ENCODE measurements at regions of chr6 and their contacts with region 1.

Region 1: GRCh38 chr6:18115356-18115755 is 7.1 kb downstream of the NHLRC1 start:
- DNase-seq: peak; percentile 56
- ATAC-seq: peak; percentile 87
- H3K4me3 Mint-ChIP-seq: peak overlapping the region; percentile 5
- H3K27ac Mint-ChIP-seq: peak overlapping the region; percentile 22
- H3K4me1 Mint-ChIP-seq: peaks cover 14% of the 10 kb centered on the region
- H3K27me3 Mint-ChIP-seq: peaks cover 44% of the 10 kb centered on the region
- CTCF ChIP-seq: no peak

Region 2: GRCh38 chr6:17884498-17885478 is 230.6 kb before region 1 on chr6:
- CTCF ChIA-PET with region 1: interaction called, 5 read pairs
- POLR2A ChIA-PET with region 1: interaction called, 3 read pairs
- intact Hi-C with region 1: loop called (anchors 5 kb)
- DNase-seq: peak; percentile 31
- ATAC-seq: peak; percentile 87
- H3K4me3 Mint-ChIP-seq: no peak overlapping the region
- H3K27ac Mint-ChIP-seq: peak overlapping the region; percentile 53
- H3K4me1 Mint-ChIP-seq: peaks cover 21% of the 10 kb centered on the region
- H3K27me3 Mint-ChIP-seq: peaks cover 39% of the 10 kb centered on the region
- CTCF ChIP-seq: no peak

Region 3: GRCh38 chr6:17987576-17988421 is 127.6 kb before region 1 on chr6 and contains the start of gene KIF13A:
- CTCF ChIA-PET with region 1: no interaction called
- POLR2A ChIA-PET with region 1: no interaction called
- intact Hi-C with region 1: loop called (anchors 5 kb)
- DNase-seq: peak; percentile 66
- ATAC-seq: peak; percentile 71
- H3K4me3 Mint-ChIP-seq: peak within 1 kb of the TSS; percentile 71
- H3K27ac Mint-ChIP-seq: no peak within 1 kb of the TSS
- H3K4me1 Mint-ChIP-seq: peaks cover 13% of the 10 kb centered on the region
- H3K27me3 Mint-ChIP-seq: peaks cover 70% of the 10 kb centered on the region
- CTCF ChIP-seq: no peak
- total RNA-seq, gene KIF13A: not detected

Region 4: DNA sequence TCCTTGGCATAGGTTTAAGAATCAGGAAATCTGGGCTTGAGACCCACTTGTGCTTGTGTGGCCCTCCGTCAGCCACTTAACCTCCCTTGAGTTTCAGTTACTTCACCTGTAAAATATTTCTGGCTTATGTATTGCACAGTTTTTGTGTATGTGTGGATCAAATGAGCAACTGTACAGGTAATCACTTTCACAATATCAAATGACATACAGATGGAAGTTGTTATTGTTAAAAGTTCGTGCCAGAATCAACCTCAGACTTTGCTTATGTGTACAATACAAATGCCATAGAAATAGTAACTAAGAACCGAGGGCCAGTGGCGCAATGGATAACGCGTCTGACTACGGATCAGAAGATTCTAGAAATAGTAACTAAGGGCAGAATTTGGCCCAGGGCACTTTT is 62.3 kb before region 1 on chr6:
- CTCF ChIA-PET with region 1: no interaction called
- POLR2A ChIA-PET with region 1: no interaction called
- intact Hi-C with region 1: no loop called
- DNase-seq: no peak
- ATAC-seq: no peak
- H3K4me3 Mint-ChIP-seq: no peak overlapping the region
- H3K27ac Mint-ChIP-seq: no peak overlapping the region
- H3K4me1 Mint-ChIP-seq: no peaks in the 10 kb centered on the region
- H3K27me3 Mint-ChIP-seq: peaks cover 11% of the 10 kb centered on the region
- CTCF ChIP-seq: no peak